ENCODE measurements at regions of chr1 and their contacts with region 1.

Region 1: GRCh38 chr1:12067900-12068821 is 5.1 kb downstream of the TNFRSF8 start:
- DNase-seq: peak; percentile 50
- ATAC-seq: no peak
- H3K4me3 Mint-ChIP-seq: no peak overlapping the region
- H3K27ac Mint-ChIP-seq: peak overlapping the region; percentile 44
- H3K4me1 Mint-ChIP-seq: peaks cover 57% of the 10 kb centered on the region
- H3K27me3 Mint-ChIP-seq: peaks cover 44% of the 10 kb centered on the region

Region 2: DNA sequence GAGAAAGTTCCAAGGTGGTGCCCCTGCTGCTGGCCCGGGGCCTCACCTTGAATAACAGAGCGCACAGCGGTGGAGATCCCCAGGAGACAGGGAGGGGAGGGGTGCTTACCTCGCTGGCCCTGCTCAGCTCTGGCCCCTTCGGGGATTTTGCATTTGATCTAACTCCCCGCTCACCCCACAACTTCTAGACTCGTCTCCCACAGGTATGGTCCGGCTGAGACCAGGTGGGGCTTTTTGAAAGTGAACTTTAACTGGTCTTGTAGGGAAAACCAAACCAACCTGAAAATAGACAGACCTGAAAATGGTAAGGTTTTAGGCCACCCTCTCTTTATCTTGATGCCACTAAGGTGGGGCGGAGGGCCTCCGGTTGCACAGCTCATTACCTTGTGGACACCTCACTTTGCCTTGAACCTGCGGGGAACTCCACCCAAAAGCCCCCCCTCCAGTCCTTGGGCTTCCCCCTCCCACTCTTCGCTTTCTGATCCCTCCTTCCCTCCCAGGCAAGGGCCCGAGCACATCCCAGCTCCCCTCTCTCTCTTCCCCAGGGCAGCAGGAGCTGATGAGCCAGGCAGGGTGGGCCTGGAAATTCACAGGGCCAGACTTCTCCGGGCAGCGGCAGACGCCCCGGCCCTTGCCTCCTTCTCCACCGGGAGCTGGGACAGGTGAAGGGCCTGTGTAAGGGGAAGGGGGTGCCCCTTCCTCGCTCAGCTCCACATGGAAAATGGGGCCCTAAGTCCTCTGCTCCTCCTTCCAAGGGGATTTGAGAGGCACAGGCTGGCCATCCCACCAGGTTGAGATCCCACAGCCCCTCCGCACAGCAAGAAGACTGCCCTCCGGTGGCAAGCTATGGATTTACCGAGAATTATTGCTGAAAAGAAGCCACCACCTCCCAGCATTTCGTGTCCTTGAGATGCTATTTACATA is 11.0 kb after region 1 on chr1:
- CTCF ChIA-PET with region 1: interaction called, 19 read pairs
- POLR2A ChIA-PET with region 1: interaction called, 3 read pairs
- DNase-seq: peak; percentile 55
- ATAC-seq: no peak
- H3K4me3 Mint-ChIP-seq: no peak overlapping the region
- H3K27ac Mint-ChIP-seq: no peak overlapping the region
- H3K4me1 Mint-ChIP-seq: peaks cover 26% of the 10 kb centered on the region
- H3K27me3 Mint-ChIP-seq: peaks cover 23% of the 10 kb centered on the region

Measured in activated CD8-positive, alpha-beta T cell treated with anti-CD3 and anti-CD28 coated beads, Interleukin-2, amount 10 ng/mL, durations not matched to agents 7 days and 5 days (primary cell).